Activated CD4-positive, alpha-beta T cell treated with anti-CD3 and anti-CD28 coated beads for 36 hours (primary cell): ENCODE measurements at regions of chr1 and their contacts with region 1.

Region 1: DNA sequence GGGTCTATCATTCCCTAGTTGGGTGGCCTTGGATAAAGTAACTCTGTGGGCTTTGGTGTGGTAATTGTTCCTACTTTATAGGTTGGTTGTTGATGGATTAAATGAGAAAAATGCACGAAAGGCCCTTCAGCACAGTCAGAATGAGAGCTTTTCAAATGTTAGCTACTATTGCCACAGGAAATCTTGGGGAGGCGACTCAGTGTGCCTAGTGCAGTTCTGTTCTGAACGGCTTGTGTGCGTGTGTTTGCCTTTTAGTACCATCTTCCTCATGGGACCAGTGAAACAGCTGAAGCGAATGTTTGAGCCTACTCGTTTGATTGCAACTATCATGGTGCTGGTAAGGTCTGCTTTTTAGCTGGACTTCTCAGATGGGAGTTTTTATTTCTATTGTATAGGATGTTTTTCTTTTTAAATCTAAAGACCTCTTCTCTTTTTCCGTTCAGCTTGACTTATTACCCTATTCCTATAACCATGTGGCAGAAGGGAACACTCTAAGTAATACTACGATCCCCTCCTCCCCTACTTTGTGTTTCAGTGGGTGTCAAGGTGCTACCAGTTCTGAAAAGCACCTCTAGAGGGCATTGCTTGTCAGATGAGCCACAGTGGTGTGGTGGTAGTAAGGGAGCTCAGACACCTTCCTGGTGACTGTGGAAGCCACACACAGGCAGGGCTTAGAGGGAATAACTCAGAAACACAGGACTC is 9.2 kb downstream of the SFT2D2 start:
- DNase-seq: peak; percentile 58
- ATAC-seq: peak; percentile 77
- H3K4me3 Mint-ChIP-seq: no peak overlapping the region
- H3K27ac Mint-ChIP-seq: peak overlapping the region; percentile 55
- H3K4me1 Mint-ChIP-seq: peaks cover 57% of the 10 kb centered on the region
- H3K27me3 Mint-ChIP-seq: no peaks in the 10 kb centered on the region

Region 2: GRCh38 chr1:167165948-167166689 is 1068.9 kb before region 1 on chr1:
- CTCF ChIA-PET with region 1: no interaction called
- POLR2A ChIA-PET with region 1: no interaction called
- intact Hi-C with region 1: no loop called
- DNase-seq: no peak
- ATAC-seq: no peak
- H3K4me3 Mint-ChIP-seq: no peak overlapping the region
- H3K27ac Mint-ChIP-seq: no peak overlapping the region
- H3K4me1 Mint-ChIP-seq: peaks cover 9% of the 10 kb centered on the region
- H3K27me3 Mint-ChIP-seq: peaks cover 27% of the 10 kb centered on the region

Region 3: GRCh38 chr1:167871331-167871730 is 363.7 kb before region 1 on chr1:
- CTCF ChIA-PET with region 1: no interaction called
- POLR2A ChIA-PET with region 1: no interaction called
- intact Hi-C with region 1: no loop called
- DNase-seq: no peak
- ATAC-seq: no peak
- H3K4me3 Mint-ChIP-seq: no peak overlapping the region
- H3K27ac Mint-ChIP-seq: no peak overlapping the region
- H3K4me1 Mint-ChIP-seq: no peaks in the 10 kb centered on the region
- H3K27me3 Mint-ChIP-seq: no peaks in the 10 kb centered on the region

Region 4: GRCh38 chr1:168136709-168137514 is 98.1 kb before region 1 on chr1 and contains the start of gene GPR161:
- CTCF ChIA-PET with region 1: interaction called, 3 read pairs
- POLR2A ChIA-PET with region 1: no interaction called
- intact Hi-C with region 1: loop called in 1 of 2 experiments (anchors 1 kb)
- DNase-seq: peak; percentile 40
- ATAC-seq: no peak
- H3K4me3 Mint-ChIP-seq: peak within 1 kb of the TSS; percentile 73
- H3K27ac Mint-ChIP-seq: peak within 1 kb of the TSS; percentile 61
- H3K4me1 Mint-ChIP-seq: peaks cover 40% of the 10 kb centered on the region
- H3K27me3 Mint-ChIP-seq: peaks cover 37% of the 10 kb centered on the region
- total RNA-seq, gene GPR161: 0.42 to 0.59 TPM

Region 5: DNA sequence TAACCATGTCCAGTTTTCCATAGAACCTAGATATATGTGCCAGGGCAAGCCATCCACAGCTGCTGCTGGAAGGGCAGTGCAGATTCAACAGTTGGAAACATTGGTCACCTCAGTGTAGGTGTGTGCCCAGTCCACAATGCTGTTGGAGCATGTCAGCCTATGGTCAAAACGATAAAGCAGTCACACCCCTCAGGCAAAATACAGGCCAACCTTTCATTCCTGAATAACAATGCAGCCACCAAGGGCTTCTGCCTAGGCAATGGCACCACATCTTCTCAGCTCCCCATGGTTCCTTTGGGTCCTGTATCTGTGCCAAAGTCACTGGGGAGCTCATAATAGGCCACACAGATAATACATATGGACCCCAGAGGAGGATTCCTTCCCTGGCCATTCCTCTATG is 30.6 kb after region 1 on chr1:
- CTCF ChIA-PET with region 1: no interaction called
- POLR2A ChIA-PET with region 1: no interaction called
- intact Hi-C with region 1: no loop called
- DNase-seq: no peak
- ATAC-seq: no peak
- H3K4me3 Mint-ChIP-seq: no peak overlapping the region
- H3K27ac Mint-ChIP-seq: no peak overlapping the region
- H3K4me1 Mint-ChIP-seq: peaks cover 10% of the 10 kb centered on the region
- H3K27me3 Mint-ChIP-seq: no peaks in the 10 kb centered on the region

Region 6: GRCh38 chr1:168321945-168322344 is 86.9 kb after region 1 on chr1:
- CTCF ChIA-PET with region 1: interaction called, 3 read pairs
- POLR2A ChIA-PET with region 1: no interaction called
- intact Hi-C with region 1: loop called (anchors 5 kb)
- DNase-seq: no peak
- ATAC-seq: peak; percentile 78
- H3K4me3 Mint-ChIP-seq: no peak overlapping the region
- H3K27ac Mint-ChIP-seq: no peak overlapping the region
- H3K4me1 Mint-ChIP-seq: peaks cover 13% of the 10 kb centered on the region
- H3K27me3 Mint-ChIP-seq: no peaks in the 10 kb centered on the region

Region 7: GRCh38 chr1:168408536-168409242 is 173.7 kb after region 1 on chr1:
- CTCF ChIA-PET with region 1: interaction called, 3 read pairs
- POLR2A ChIA-PET with region 1: no interaction called
- intact Hi-C with region 1: loop called in 1 of 2 experiments (anchors 5 kb)
- DNase-seq: peak; percentile 79
- ATAC-seq: peak; percentile 90
- H3K4me3 Mint-ChIP-seq: peak overlapping the region; percentile 10
- H3K27ac Mint-ChIP-seq: peak overlapping the region; percentile 86
- H3K4me1 Mint-ChIP-seq: peaks cover 37% of the 10 kb centered on the region
- H3K27me3 Mint-ChIP-seq: no peaks in the 10 kb centered on the region

Region 8: DNA sequence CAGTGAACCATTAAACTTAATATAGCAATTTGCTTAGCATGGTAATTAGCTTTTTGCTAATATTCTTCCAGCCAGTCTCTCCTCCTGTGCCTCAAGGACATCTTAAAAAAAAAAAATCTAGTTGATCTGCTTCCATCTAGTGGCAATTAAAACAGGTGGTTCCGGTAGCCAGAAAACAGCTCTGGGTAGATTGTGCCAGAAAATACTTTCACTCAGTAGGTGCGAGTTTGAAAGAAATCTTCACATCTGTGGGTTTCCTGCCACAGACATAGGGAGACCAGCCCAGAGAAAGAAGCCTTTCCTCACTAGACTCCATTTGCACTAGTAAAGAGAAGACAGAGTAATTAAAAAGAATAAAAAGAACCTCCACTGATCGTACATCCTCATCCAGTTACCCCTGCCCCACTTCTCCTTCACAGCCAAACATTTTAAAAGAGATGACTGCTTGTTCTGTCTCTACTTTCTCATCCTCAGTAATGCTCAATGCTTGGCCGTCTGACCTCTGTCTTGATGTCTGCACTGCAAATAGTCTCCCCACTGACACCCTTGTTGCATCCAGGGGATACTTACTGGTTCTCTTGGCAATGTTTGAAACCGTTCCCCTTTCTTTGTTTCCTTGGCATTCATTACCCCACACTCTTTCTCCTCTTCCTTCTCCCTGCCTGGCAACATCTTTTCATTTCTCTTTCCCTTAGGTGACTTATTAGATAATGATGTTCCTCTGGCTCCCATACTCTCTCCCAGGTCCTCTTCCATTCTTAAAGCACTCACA is 1459.5 kb after region 1 on chr1:
- CTCF ChIA-PET with region 1: no interaction called
- POLR2A ChIA-PET with region 1: no interaction called
- intact Hi-C with region 1: loop called in 1 of 2 experiments (anchors 10 kb)
- DNase-seq: peak; percentile 52
- ATAC-seq: peak; percentile 26
- H3K4me3 Mint-ChIP-seq: peak overlapping the region; percentile 39
- H3K27ac Mint-ChIP-seq: peak overlapping the region; percentile 95
- H3K4me1 Mint-ChIP-seq: peaks cover 97% of the 10 kb centered on the region
- H3K27me3 Mint-ChIP-seq: no peaks in the 10 kb centered on the region